MCF 10A (cell line): ENCODE measurements at regions of chr7 and their contacts with region 1.

Region 1: GRCh38 chr7:13524076-13524475 is 465.4 kb downstream of the ETV1 start:
- DNase-seq: peak; percentile 41
- H3K4me3 Mint-ChIP-seq: no peak overlapping the region
- H3K27ac Mint-ChIP-seq: no peak overlapping the region
- H3K4me1 Mint-ChIP-seq: peaks cover 7% of the 10 kb centered on the region
- H3K27me3 Mint-ChIP-seq: peaks cover 50% of the 10 kb centered on the region
- CTCF ChIP-seq: no peak

Region 2: DNA sequence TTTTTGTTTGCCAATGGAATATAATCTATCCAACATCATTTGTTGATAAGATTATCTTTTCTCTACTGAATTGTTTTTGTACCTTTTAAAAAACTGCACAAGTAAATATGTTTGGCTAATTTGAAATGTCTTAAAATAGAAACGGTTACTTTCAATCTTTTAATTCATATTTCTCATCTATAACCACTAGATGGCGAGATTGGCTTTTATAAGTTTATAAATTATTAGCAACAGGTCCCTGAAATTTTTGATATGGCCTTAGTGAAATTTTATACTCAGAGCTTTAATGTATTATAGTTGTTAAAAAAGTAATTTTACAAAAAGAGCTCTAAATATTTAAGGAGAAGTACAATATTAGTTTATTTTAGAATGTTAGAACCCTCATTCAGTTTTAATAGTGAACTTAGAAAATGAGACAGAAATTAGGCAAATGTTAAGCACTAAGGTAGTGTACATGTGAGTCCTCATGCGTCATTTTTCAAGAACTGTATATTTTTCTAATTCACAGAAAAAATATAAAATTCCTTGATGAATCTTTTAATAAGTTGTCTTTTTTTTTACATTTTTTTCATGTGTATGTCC is 244.1 kb before region 1 on chr7:
- CTCF ChIA-PET with region 1: interaction called, 5 read pairs
- POLR2A ChIA-PET with region 1: interaction called, 3 read pairs
- intact Hi-C with region 1: loop called (anchors 10 kb)
- DNase-seq: peak; percentile 44
- H3K4me3 Mint-ChIP-seq: no peak overlapping the region
- H3K27ac Mint-ChIP-seq: no peak overlapping the region
- H3K4me1 Mint-ChIP-seq: no peaks in the 10 kb centered on the region
- H3K27me3 Mint-ChIP-seq: peaks cover 2% of the 10 kb centered on the region
- CTCF ChIP-seq: peak; percentile 33

Region 3: GRCh38 chr7:13540429-13540828 is 16.4 kb after region 1 on chr7:
- CTCF ChIA-PET with region 1: interaction called, 15 read pairs
- POLR2A ChIA-PET with region 1: no interaction called
- intact Hi-C with region 1: no loop called
- DNase-seq: peak; percentile 15
- H3K4me3 Mint-ChIP-seq: no peak overlapping the region
- H3K27ac Mint-ChIP-seq: no peak overlapping the region
- H3K4me1 Mint-ChIP-seq: peaks cover 4% of the 10 kb centered on the region
- H3K27me3 Mint-ChIP-seq: no peaks in the 10 kb centered on the region
- CTCF ChIP-seq: no peak

Region 4: DNA sequence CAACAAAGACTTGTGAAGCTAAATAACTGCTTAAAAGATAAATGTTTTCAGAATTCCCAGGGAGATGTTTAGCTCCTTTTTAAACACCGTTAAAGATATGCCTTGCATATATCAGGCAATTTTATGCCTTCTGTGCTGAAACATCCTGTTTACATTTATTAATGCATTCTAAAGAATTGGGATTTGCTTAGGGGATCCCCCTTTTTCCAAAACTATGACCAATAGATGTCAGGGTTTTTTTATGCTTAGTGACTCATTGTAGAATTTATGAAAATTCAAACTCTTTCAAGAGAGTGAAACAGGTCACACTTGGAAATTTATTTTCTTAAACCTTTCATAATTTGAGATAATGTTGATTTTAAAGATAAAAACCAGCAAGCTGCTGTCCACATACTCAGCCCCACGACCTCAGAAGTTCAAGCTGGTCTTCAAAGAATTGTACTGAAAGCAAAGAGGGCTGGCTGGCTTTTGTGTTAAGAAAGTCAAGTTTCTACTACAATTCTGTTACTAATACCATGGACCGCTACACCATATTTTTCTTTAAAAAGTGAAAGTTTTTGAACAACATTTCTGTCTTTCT is 53.6 kb after region 1 on chr7:
- CTCF ChIA-PET with region 1: no interaction called
- POLR2A ChIA-PET with region 1: no interaction called
- intact Hi-C with region 1: no loop called
- DNase-seq: no peak
- H3K4me3 Mint-ChIP-seq: no peak overlapping the region
- H3K27ac Mint-ChIP-seq: no peak overlapping the region
- H3K4me1 Mint-ChIP-seq: no peaks in the 10 kb centered on the region
- H3K27me3 Mint-ChIP-seq: no peaks in the 10 kb centered on the region
- CTCF ChIP-seq: no peak

Region 5: DNA sequence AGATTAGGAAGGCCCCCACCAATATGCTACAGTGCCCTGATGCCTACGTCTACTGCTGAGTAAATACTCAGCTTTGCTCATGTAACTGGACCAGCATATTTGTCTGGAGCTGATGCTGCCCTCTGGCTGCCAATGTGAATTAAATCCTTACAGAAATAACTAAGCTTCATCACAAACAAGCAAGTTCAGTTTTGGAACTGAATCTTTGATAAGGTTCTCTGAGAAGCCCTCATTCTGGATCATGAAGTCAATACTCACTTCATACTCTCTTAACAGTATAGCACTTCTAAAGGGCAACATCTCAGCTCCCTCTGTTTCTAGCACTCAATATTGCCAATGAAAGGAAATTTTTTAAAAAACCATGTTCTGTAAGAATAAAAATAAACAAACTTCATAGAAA is 218.7 kb after region 1 on chr7:
- CTCF ChIA-PET with region 1: interaction called, 5 read pairs
- POLR2A ChIA-PET with region 1: no interaction called
- intact Hi-C with region 1: loop called (anchors 1 kb)
- DNase-seq: peak; percentile 66
- H3K4me3 Mint-ChIP-seq: no peak overlapping the region
- H3K27ac Mint-ChIP-seq: peak overlapping the region; percentile 4
- H3K4me1 Mint-ChIP-seq: no peaks in the 10 kb centered on the region
- H3K27me3 Mint-ChIP-seq: no peaks in the 10 kb centered on the region
- CTCF ChIP-seq: no peak

Region 6: GRCh38 chr7:14457568-14458453 is 933.7 kb after region 1 on chr7:
- CTCF ChIA-PET with region 1: interaction called, 6 read pairs
- POLR2A ChIA-PET with region 1: no interaction called
- intact Hi-C with region 1: loop called (anchors 1 kb)
- DNase-seq: peak; percentile 81
- H3K4me3 Mint-ChIP-seq: no peak overlapping the region
- H3K27ac Mint-ChIP-seq: no peak overlapping the region
- H3K4me1 Mint-ChIP-seq: no peaks in the 10 kb centered on the region
- H3K27me3 Mint-ChIP-seq: no peaks in the 10 kb centered on the region
- CTCF ChIP-seq: peak; percentile 76